ENCODE measurements at regions of chr19 and their contacts with region 1.

Region 1: GRCh38 chr19:13189600-13189999 is 39.4 kb downstream of the IER2 start:
- DNase-seq: no peak
- H3K4me3 ChIP-seq: no peak overlapping the region
- H3K27ac ChIP-seq: no peak overlapping the region
- H3K4me1 ChIP-seq: no peaks in the 10 kb centered on the region; the same call in 1 of the 2 replicates
- H3K27me3 ChIP-seq: no peaks in the 10 kb centered on the region
- CTCF ChIP-seq: no peak

Region 2: DNA sequence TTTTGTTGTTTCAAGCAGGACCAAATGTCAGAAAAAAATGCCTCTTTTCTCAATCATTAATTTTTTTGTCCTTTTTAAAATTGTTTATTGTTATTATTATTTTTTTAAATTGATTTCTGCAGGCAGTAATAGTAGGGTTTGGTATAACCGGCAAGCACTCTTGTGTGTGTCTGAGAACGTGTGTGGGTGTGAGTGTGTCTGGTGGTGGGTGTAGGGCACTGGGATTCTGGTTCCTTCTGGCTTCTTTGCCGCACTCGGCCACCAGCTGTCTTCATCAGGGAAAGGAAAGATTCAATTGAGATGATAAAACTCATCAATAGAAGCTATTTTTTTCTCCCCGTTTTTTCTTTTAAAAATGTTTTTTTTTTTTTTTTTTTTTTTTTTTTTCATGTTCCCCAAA is 17.0 kb after region 1 on chr19:
- CTCF ChIA-PET with region 1: no interaction called
- POLR2A ChIA-PET with region 1: interaction called, 23 read pairs
- intact Hi-C with region 1: no loop called
- DNase-seq: no peak
- H3K4me3 ChIP-seq: peak overlapping the region; percentile 66; the same call in 1 of the 2 replicates
- H3K27ac ChIP-seq: peak overlapping the region; percentile 70
- H3K4me1 ChIP-seq: no peaks in the 10 kb centered on the region; the same call in 1 of the 2 replicates
- H3K27me3 ChIP-seq: no peaks in the 10 kb centered on the region
- CTCF ChIP-seq: no peak